K562 (cell line): ENCODE measurements at regions of chrX and their contacts with region 1.

Region 1: GRCh38 chrX:150587585-150588503 is 19.4 kb downstream of the MTM1 start:
- DNase-seq: peak; percentile 26 to 48 (median 35)
- ATAC-seq: peak; percentile 72
- H3K4me3 ChIP-seq: no peak overlapping the region
- H3K27ac ChIP-seq: no peak overlapping the region
- H3K4me1 ChIP-seq: no peaks in the 10 kb centered on the region
- H3K27me3 ChIP-seq: no peaks in the 10 kb centered on the region
- CTCF ChIP-seq: peak; percentile 50 to 74 (median 65); a peak in 5 of 6 replicates
- EP300 ChIP-seq: no peak
- POLR2A ChIP-seq: no peak
- RAD21 ChIP-seq: peak; percentile 35 to 47; a peak in 3 of 4 replicates

Region 2: GRCh38 chrX:150236327-150236726 is 351.5 kb before region 1 on chrX:
- CTCF ChIA-PET with region 1: no interaction called
- POLR2A ChIA-PET with region 1: no interaction called
- in situ Hi-C with region 1: no loop called
- intact Hi-C with region 1: no loop called
- DNase-seq: no peak
- ATAC-seq: no peak
- H3K4me3 ChIP-seq: no peak overlapping the region
- H3K27ac ChIP-seq: no peak overlapping the region
- H3K4me1 ChIP-seq: no peaks in the 10 kb centered on the region
- H3K27me3 ChIP-seq: no peaks in the 10 kb centered on the region; a peak in 1 of 5 replicates
- CTCF ChIP-seq: no peak
- EP300 ChIP-seq: no peak
- POLR2A ChIP-seq: no peak
- RAD21 ChIP-seq: no peak

Region 3: DNA sequence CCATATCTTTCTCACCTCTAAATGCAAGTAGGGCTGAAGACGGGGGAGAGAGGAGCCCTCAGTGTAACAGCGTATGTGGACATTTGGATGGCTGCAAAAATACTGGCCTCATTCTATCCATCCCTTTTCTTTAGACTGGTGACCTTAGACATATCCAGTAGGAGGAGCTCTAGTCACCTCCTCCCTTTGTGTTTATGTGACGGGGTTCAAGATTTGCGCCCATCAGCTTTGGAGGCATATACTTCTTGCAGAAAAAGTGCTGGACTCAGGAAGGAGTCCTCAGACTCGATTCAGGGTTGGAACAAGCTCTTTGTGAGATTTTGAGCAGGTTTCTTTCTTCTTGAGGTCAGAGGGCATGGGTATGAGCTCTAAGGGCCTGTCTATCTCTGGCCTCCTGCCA is 138.5 kb before region 1 on chrX:
- CTCF ChIA-PET with region 1: no interaction called
- POLR2A ChIA-PET with region 1: no interaction called
- in situ Hi-C with region 1: no loop called
- intact Hi-C with region 1: loop called (anchors 10 kb)
- DNase-seq: peak in 2 of 4 experiments; percentile 14 to 20
- ATAC-seq: peak; percentile 75
- H3K4me3 ChIP-seq: no peak overlapping the region
- H3K27ac ChIP-seq: no peak overlapping the region
- H3K4me1 ChIP-seq: no peaks in the 10 kb centered on the region
- H3K27me3 ChIP-seq: no peaks in the 10 kb centered on the region
- CTCF ChIP-seq: peak; percentile 49 to 58 (median 50); a peak in 4 of 6 replicates
- EP300 ChIP-seq: no peak
- POLR2A ChIP-seq: no peak
- RAD21 ChIP-seq: peak; percentile 31 to 68; a peak in 3 of 4 replicates

Region 4: DNA sequence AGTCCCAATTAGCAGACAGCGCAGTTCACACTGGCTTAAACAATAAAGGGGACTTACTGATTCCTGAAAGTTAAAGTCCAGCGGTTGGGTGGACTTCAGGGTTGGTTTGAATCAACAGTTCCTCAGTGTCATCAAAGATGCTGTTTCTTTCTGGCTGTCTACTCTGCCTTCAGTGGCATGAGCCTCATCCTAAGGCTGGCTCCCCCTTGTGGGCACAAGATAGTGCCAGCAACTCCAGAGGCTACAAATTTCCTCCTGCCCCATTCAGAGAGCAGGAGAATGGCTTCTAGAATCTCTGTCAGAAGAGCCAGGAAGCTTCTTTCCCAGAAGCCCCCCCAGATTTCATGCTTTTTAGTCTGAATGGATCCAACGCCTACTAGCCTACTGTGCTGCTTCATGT is 101.8 kb before region 1 on chrX:
- CTCF ChIA-PET with region 1: no interaction called
- POLR2A ChIA-PET with region 1: no interaction called
- in situ Hi-C with region 1: no loop called
- intact Hi-C with region 1: loop called (anchors 1 kb)
- DNase-seq: peak; percentile 12 to 30 (median 16)
- ATAC-seq: peak; percentile 75
- H3K4me3 ChIP-seq: no peak overlapping the region
- H3K27ac ChIP-seq: no peak overlapping the region
- H3K4me1 ChIP-seq: peaks cover 0 to 10% of the 10 kb centered on the region in 2 experiments; a peak in 2 of 5 replicates
- H3K27me3 ChIP-seq: 0 out of 5 replicates have a peak, but pooled peaks cover 0 to under 1% of the 10 kb centered on the region in 2 experiments
- CTCF ChIP-seq: peak; percentile 33 to 55 (median 49); a peak in 4 of 6 replicates
- EP300 ChIP-seq: no peak
- POLR2A ChIP-seq: no peak
- RAD21 ChIP-seq: peak in 1 of 2 experiments; percentile 30; a peak in 3 of 4 replicates

Region 5: DNA sequence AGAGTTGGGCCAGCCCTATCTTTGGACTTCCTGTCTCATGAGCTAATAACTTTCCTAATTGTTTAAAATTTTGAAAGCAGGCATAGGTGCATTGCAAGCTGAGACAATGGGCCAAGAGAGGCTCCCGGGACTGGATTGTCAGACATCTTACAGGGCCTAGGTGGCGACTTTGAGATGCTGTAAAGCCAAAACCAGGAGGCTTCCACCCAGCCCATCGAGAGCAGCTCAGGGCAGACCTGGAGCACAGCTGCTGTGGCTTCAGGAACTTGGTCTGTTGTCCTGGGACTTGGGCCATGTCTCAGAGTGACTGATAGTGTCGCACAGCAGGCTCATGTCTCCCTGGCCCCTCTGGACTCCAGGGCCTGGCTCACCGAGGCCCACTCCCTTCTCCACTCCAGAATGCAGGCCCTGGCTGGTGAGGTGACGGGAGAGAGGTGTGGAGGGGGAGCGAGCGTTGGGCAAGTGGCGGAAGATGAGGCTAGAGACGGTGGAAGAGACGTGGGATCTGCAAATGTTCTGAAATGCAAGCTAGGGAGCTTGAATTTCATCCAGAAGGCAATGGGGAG is 43.5 kb before region 1 on chrX:
- CTCF ChIA-PET with region 1: no interaction called
- POLR2A ChIA-PET with region 1: no interaction called
- in situ Hi-C with region 1: no loop called
- intact Hi-C with region 1: loop called (anchors 5 kb)
- DNase-seq: peak in 2 of 4 experiments; percentile 20 to 36
- ATAC-seq: peak; percentile 74
- H3K4me3 ChIP-seq: no peak overlapping the region
- H3K27ac ChIP-seq: no peak overlapping the region
- H3K4me1 ChIP-seq: peaks cover 4 to 10% of the 10 kb centered on the region in 2 experiments; a peak in 3 of 5 replicates
- H3K27me3 ChIP-seq: peaks cover 0 to 4% of the 10 kb centered on the region in 2 experiments; a peak in 2 of 5 replicates
- CTCF ChIP-seq: peak; percentile 11 to 44 (median 31); a peak in 2 of 6 replicates
- EP300 ChIP-seq: no peak
- POLR2A ChIP-seq: no peak
- RAD21 ChIP-seq: peak; percentile 22 to 53; a peak in 3 of 4 replicates